ENCODE measurements at regions of chr14 and their contacts with region 1.

Region 1: DNA sequence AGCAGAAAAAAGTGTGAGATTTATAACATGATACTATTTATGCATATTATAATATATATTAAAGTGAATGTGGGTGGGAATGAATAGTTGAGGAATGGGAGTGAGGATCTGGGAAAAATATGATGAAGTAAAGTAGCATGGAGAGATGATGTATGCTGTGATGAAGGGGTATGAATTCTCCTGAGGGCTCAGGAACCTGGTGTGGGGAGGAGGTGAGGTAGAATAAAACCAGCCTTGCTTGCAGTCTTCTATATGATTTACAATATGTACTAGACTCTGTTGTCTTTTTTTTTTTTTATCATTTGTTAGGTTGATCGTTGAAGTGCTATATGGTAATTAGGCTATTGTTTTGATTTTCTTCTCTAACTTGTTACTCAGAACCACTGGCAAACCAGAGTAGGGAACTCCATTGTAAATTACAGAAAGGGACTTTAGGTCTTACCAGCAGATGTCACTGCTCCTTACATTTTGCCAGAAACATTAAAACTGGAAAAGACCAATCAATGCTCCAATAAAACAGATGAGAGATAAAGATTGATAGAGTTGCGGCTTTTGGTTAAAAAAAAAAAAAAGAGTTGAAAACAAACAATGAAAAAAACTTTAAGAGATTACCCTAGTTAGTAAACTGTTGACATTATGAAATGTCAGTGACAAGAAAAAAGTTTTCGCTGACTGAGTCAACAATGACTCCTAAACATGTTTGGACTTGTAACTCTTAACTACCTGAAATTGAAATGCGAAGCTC is 39.9 kb downstream of the ATL1 start:
- DNase-seq: no peak
- H3K4me3 ChIP-seq: no peak overlapping the region
- H3K27ac ChIP-seq: peak overlapping the region in 45 of 59 donors; percentile 3 to 83 (median 62)
- H3K27me3 ChIP-seq: no peaks in the 10 kb centered on the region
- CTCF ChIP-seq: peak; percentile 43 to 88 (median 70)

Region 2: GRCh38 chr14:50559990-50560930 is 39.6 kb before region 1 on chr14 and contains the start of gene ATL1:
- intact Hi-C with region 1: loop called in 1 of 2 experiments (anchors 5 kb)
- DNase-seq: peak; percentile 58 to 87 (median 80)
- H3K4me3 ChIP-seq: peak within 1 kb of the TSS; percentile 54 to 94 (median 83)
- H3K27ac ChIP-seq: peak within 1 kb of the TSS; percentile 81 to 100 (median 98)
- H3K27me3 ChIP-seq: no peaks in the 10 kb centered on the region
- CTCF ChIP-seq: peak in 16 of 56 donors; percentile 2 to 36 (median 12)
- total RNA-seq, gene ATL1: 29.5 to 146 (median 100.0) TPM

Region 3: DNA sequence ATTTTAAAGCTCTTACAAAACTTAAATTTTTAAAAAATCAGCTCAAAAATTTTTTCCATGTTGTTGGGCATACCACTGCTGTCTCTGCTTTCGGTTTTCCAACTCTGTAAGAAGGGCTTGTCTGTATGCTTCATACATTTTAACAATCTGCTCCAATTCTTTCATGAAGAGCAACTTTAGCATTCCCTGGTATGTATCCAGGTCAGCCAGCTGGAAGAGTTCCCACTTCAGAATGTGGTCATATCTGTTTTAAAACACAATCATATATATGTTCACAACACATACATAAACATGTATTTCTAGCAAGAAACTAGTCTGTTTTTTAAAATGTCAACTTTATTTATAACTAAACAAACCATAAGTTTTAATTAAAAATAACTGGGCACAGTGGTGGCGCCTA is 35.3 kb after region 1 on chr14:
- intact Hi-C with region 1: no loop called
- DNase-seq: no peak
- H3K4me3 ChIP-seq: no peak overlapping the region
- H3K27ac ChIP-seq: peak overlapping the region in 6 of 59 donors; percentile 4 to 60 (median 18)
- H3K27me3 ChIP-seq: no peaks in the 10 kb centered on the region
- CTCF ChIP-seq: no peak

Region 4: GRCh38 chr14:50714450-50715073 is 114.7 kb after region 1 on chr14:
- intact Hi-C with region 1: loop called in 1 of 2 experiments (anchors 5 kb)
- DNase-seq: no peak
- H3K4me3 ChIP-seq: no peak overlapping the region
- H3K27ac ChIP-seq: peak overlapping the region in 1 of 59 donors; percentile 9
- H3K27me3 ChIP-seq: no peaks in the 10 kb centered on the region
- CTCF ChIP-seq: peak in 55 of 56 donors; percentile 29 to 79 (median 61)

Region 5: GRCh38 chr14:50813544-50813863 is 213.6 kb after region 1 on chr14:
- intact Hi-C with region 1: no loop called
- DNase-seq: no peak
- H3K4me3 ChIP-seq: no peak overlapping the region
- H3K27ac ChIP-seq: peak overlapping the region in 3 of 59 donors; percentile 0 to 36 (median 29)
- H3K27me3 ChIP-seq: no peaks in the 10 kb centered on the region
- CTCF ChIP-seq: no peak

Region 6: GRCh38 chr14:50846226-50846880 is 246.5 kb after region 1 on chr14:
- intact Hi-C with region 1: no loop called
- DNase-seq: no peak
- H3K4me3 ChIP-seq: no peak overlapping the region
- H3K27ac ChIP-seq: no peak overlapping the region
- H3K27me3 ChIP-seq: no peaks in the 10 kb centered on the region
- CTCF ChIP-seq: no peak

Measured in dorsolateral prefrontal cortex (tissue), 120 donors.